ENCODE measurements at regions of chr2 and their contacts with region 1.

Region 1: DNA sequence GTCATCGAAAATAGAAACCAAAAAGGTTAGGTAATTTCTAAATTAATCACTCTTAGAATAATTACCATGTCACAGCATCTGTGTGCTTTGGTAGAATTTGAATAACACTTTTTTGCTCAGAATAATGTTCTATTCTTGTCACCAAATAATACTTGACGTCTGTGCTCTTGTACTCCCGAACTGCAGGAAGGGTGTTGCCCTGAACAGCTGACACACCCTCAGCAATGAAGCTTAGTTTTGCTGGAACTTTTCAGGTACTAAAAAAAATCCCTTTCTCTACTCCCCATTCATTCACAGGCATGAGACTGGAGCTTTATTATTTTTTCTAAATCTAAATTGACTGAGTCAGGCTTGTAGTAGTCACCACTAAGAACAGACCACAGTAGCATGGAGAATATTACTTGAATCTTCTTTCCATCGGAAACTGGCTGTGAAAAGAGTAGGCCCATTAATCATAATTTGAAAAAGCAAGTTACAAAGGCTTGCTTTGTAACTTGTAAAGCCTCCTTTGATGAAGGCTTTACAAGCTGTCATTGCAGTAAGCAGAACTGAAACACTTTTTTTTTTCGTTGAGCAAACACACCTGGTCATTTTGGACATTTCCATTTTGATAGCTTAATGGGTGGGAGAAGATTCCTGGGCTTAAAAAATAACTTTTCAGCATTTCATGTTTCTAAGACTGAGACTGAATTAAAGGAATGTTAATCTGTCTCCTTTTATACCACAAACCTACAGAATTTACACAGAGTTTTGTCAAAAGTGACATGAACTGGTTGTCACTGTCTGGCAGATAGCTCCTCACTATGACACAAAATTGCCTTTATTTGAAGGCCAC is 70.3 kb upstream of the PELI1 start:
- DNase-seq: no peak
- ATAC-seq: peak; percentile 64
- H3K4me3 Mint-ChIP-seq: peak overlapping the region; percentile 75
- H3K27ac Mint-ChIP-seq: peak overlapping the region; percentile 99
- H3K4me1 Mint-ChIP-seq: peaks cover 76% of the 10 kb centered on the region
- H3K27me3 Mint-ChIP-seq: no peaks in the 10 kb centered on the region
- CTCF ChIP-seq: no peak

Region 2: DNA sequence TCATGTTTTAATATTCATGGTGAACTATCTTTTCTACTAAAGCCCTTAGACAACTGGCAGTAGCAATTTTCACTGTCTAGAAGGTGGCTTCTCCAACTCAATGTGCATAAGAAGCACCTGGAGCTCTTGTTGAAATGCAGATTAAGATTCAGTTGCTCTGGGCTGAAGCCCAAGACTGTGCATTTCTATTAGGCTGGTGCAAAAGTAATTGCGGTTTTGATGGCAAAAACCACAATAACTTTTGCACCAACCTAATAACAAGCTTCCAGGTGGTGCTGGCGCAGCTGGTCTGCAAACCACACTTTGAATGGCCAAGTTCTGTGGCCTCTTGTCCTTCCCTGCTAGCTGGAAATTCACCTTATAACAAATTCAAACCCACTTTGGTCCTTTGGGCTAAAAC is 168.6 kb before region 1 on chr2:
- CTCF ChIA-PET with region 1: interaction called, 4 read pairs
- POLR2A ChIA-PET with region 1: interaction called, 8 read pairs
- intact Hi-C with region 1: loop called (anchors 5 kb)
- DNase-seq: no peak
- ATAC-seq: no peak
- H3K4me3 Mint-ChIP-seq: no peak overlapping the region
- H3K27ac Mint-ChIP-seq: no peak overlapping the region
- H3K4me1 Mint-ChIP-seq: peaks cover 8% of the 10 kb centered on the region
- H3K27me3 Mint-ChIP-seq: no peaks in the 10 kb centered on the region
- CTCF ChIP-seq: no peak

Region 3: GRCh38 chr2:64144057-64145013 is 70.2 kb before region 1 on chr2 and contains the start of gene PELI1:
- CTCF ChIA-PET with region 1: no interaction called
- POLR2A ChIA-PET with region 1: interaction called, 22 read pairs
- intact Hi-C with region 1: loop called (anchors 1 kb)
- DNase-seq: peak; percentile 83
- ATAC-seq: peak; percentile 95
- H3K4me3 Mint-ChIP-seq: peak within 1 kb of the TSS; percentile 96
- H3K27ac Mint-ChIP-seq: peak within 1 kb of the TSS; percentile 95
- H3K4me1 Mint-ChIP-seq: peaks cover 37% of the 10 kb centered on the region
- H3K27me3 Mint-ChIP-seq: no peaks in the 10 kb centered on the region
- CTCF ChIP-seq: no peak
- total RNA-seq, gene PELI1: 81.4 and 93.1 TPM in 2 replicates

Region 4: DNA sequence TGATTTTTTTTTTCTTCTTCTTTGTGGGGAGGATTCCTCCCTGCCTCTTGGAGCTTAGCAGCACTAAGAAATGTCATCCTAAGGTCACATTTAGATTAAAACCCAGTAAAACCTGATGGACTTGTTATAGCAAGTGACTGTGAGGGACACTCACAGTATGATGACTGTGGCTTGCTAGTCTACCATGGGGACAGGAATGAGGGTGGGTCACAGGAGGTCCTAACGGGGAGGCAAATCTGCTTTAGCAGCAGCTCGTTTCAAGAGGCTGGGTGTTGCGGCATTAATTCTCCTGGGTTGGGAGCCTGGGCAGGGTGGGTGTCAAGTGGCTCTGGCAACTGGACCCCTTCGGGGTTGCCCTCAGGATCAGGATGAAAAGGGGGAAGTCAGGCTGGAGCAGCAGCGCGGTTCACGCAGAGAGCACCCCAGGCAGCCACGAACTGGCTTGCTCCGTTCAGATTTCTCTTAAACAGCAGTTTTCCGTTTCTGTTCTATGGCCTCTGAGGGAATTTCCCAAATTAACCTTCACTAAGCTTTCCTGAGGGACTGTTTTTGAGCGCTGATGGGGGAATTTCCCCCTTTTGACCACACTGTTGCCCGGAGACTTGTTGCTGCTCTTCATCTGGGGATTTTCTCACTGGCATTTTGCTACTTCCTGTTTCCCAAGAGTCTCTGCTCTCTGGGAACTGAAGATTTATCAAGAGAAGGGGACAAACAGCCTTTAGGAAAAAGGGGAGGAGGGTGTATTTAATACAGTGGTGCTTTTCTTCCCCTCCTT is 10.5 kb before region 1 on chr2:
- CTCF ChIA-PET with region 1: no interaction called
- POLR2A ChIA-PET with region 1: interaction called, 29 read pairs
- intact Hi-C with region 1: loop called (anchors 1 kb)
- DNase-seq: peak; percentile 42
- ATAC-seq: peak; percentile 79
- H3K4me3 Mint-ChIP-seq: peak overlapping the region; percentile 83
- H3K27ac Mint-ChIP-seq: peak overlapping the region; percentile 93
- H3K4me1 Mint-ChIP-seq: peaks cover 72% of the 10 kb centered on the region
- H3K27me3 Mint-ChIP-seq: no peaks in the 10 kb centered on the region
- CTCF ChIP-seq: no peak

Region 5: GRCh38 chr2:64260817-64261216 is 46.3 kb after region 1 on chr2:
- CTCF ChIA-PET with region 1: no interaction called
- POLR2A ChIA-PET with region 1: interaction called, 12 read pairs
- intact Hi-C with region 1: loop called (anchors 1 kb)
- DNase-seq: peak; percentile 46
- ATAC-seq: peak; percentile 92
- H3K4me3 Mint-ChIP-seq: peak overlapping the region; percentile 70
- H3K27ac Mint-ChIP-seq: peak overlapping the region; percentile 92
- H3K4me1 Mint-ChIP-seq: peaks cover 41% of the 10 kb centered on the region
- H3K27me3 Mint-ChIP-seq: no peaks in the 10 kb centered on the region
- CTCF ChIP-seq: no peak